ENCODE measurements at regions of chr10 and their contacts with region 1.

Region 1: DNA sequence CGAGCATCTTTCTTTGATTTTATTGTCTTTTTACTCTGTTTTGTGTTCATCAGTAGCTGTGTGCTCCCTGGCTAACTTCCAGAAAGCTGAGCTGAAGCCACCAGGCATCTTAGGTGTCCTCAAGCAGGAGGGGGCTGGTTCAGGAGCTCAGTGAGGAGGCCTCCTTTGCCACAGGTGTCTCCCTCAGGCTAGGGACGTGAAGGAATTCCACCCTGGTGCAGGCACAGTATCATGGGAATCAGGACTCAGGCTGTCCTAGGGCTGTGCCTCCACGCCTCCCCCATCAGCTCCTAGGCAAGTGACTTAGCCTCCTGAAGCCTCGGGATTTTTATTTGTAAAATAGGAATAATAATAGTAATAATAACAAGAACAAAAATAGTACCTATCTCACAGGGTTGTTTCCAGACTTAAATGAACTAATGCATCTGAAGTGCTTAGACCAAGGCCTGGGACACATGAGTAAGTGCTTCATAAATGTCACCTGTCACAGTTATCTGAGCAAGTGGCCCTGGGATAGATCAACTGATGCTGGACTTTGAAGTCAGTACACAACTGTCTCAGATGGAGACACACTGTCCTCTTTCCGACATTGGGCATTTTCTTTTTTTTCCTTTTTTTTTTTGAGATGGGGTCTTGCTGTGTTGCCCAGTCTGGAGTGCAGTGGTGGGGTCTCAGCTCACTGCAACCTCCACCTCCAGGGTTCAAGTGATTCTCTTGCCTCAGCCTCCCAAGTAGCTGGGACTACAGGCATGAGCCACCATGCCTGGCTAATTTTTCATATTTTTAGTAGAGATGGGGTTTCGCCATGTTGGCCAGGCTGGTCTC is 7.0 kb upstream of the NEURL1 start:
- DNase-seq: no peak
- H3K4me3 ChIP-seq: no peak overlapping the region
- H3K27ac ChIP-seq: no peak overlapping the region
- H3K4me1 ChIP-seq: no peaks in the 10 kb centered on the region
- H3K27me3 ChIP-seq: no peaks in the 10 kb centered on the region
- CTCF ChIP-seq: no peak

Region 2: GRCh38 chr10:103416436-103417147 is 70.0 kb before region 1 on chr10:
- intact Hi-C with region 1: loop called (anchors 5 kb)
- DNase-seq: peak in 4 of 5 donors; percentile 56 to 87 (median 66)
- H3K4me3 ChIP-seq: no peak overlapping the region
- H3K27ac ChIP-seq: no peak overlapping the region
- H3K4me1 ChIP-seq: no peaks in the 10 kb centered on the region
- H3K27me3 ChIP-seq: no peaks in the 10 kb centered on the region
- CTCF ChIP-seq: peak; percentile 66

Measured in kidney (tissue), 22 donors.